ENCODE measurements at regions of chr6 and their contacts with region 1.

Region 1: GRCh38 chr6:152100183-152100618 is 292.7 kb downstream of the ESR1 start:
- DNase-seq: peak; percentile 68
- H3K4me3 ChIP-seq: no peak overlapping the region
- H3K27ac ChIP-seq: peak overlapping the region; percentile 58
- H3K4me1 ChIP-seq: peaks cover 38% of the 10 kb centered on the region
- H3K27me3 ChIP-seq: no peaks in the 10 kb centered on the region
- CTCF ChIP-seq: no peak
- POLR2A ChIP-seq: no peak

Region 2: GRCh38 chr6:151858294-151858693 is 241.9 kb before region 1 on chr6:
- CTCF ChIA-PET with region 1: no interaction called
- POLR2A ChIA-PET with region 1: no interaction called
- dilution Hi-C with region 1: no loop called
- intact Hi-C with region 1: no loop called
- DNase-seq: no peak
- H3K4me3 ChIP-seq: no peak overlapping the region
- H3K27ac ChIP-seq: no peak overlapping the region
- H3K4me1 ChIP-seq: no peaks in the 10 kb centered on the region
- H3K27me3 ChIP-seq: peaks cover 0 to 3% of the 10 kb centered on the region in 2 experiments
- CTCF ChIP-seq: no peak
- POLR2A ChIP-seq: no peak

Region 3: GRCh38 chr6:151891524-151891923 is 208.7 kb before region 1 on chr6:
- CTCF ChIA-PET with region 1: no interaction called
- POLR2A ChIA-PET with region 1: no interaction called
- dilution Hi-C with region 1: no loop called
- intact Hi-C with region 1: loop called (anchors 2 kb)
- DNase-seq: peak; percentile 96
- H3K4me3 ChIP-seq: peak overlapping the region in 1 of 3 experiments; percentile 23
- H3K27ac ChIP-seq: peak overlapping the region; percentile 60
- H3K4me1 ChIP-seq: peaks cover 19% of the 10 kb centered on the region
- H3K27me3 ChIP-seq: no peaks in the 10 kb centered on the region
- CTCF ChIP-seq: no peak
- POLR2A ChIP-seq: no peak

Region 4: GRCh38 chr6:152117156-152118133 is 17.2 kb after region 1 on chr6:
- CTCF ChIA-PET with region 1: interaction called, 6 read pairs
- POLR2A ChIA-PET with region 1: no interaction called
- dilution Hi-C with region 1: no loop called
- intact Hi-C with region 1: loop called (anchors 1 kb)
- DNase-seq: no peak
- H3K4me3 ChIP-seq: no peak overlapping the region
- H3K27ac ChIP-seq: no peak overlapping the region
- H3K4me1 ChIP-seq: peaks cover 3% of the 10 kb centered on the region
- H3K27me3 ChIP-seq: no peaks in the 10 kb centered on the region
- CTCF ChIP-seq: no peak
- POLR2A ChIP-seq: no peak

Region 5: GRCh38 chr6:152136453-152136825 is 36.2 kb after region 1 on chr6:
- CTCF ChIA-PET with region 1: no interaction called
- POLR2A ChIA-PET with region 1: no interaction called
- dilution Hi-C with region 1: no loop called
- intact Hi-C with region 1: no loop called
- DNase-seq: peak; percentile 20
- H3K4me3 ChIP-seq: no peak overlapping the region
- H3K27ac ChIP-seq: no peak overlapping the region
- H3K4me1 ChIP-seq: peaks cover 5% of the 10 kb centered on the region
- H3K27me3 ChIP-seq: no peaks in the 10 kb centered on the region
- CTCF ChIP-seq: no peak
- POLR2A ChIP-seq: no peak

Region 6: GRCh38 chr6:152458648-152459644 is 358.7 kb after region 1 on chr6:
- CTCF ChIA-PET with region 1: no interaction called
- POLR2A ChIA-PET with region 1: no interaction called
- dilution Hi-C with region 1: no loop called
- intact Hi-C with region 1: loop called (anchors 5 kb)
- DNase-seq: peak; percentile 48
- H3K4me3 ChIP-seq: no peak overlapping the region
- H3K27ac ChIP-seq: no peak overlapping the region
- H3K4me1 ChIP-seq: peaks cover 17% of the 10 kb centered on the region
- H3K27me3 ChIP-seq: no peaks in the 10 kb centered on the region
- CTCF ChIP-seq: no peak
- POLR2A ChIP-seq: no peak